ENCODE measurements at regions of chr13 and their contacts with region 1.

Region 1: GRCh38 chr13:34174671-34175145 is 356.8 kb downstream of the RFC3 start:
- DNase-seq: no peak
- ATAC-seq: no peak
- H3K4me3 ChIP-seq: no peak overlapping the region
- H3K27ac ChIP-seq: no peak overlapping the region
- H3K4me1 ChIP-seq: peaks cover 2 to 6% of the 10 kb centered on the region in 2 donors
- H3K27me3 ChIP-seq: no peaks in the 10 kb centered on the region

Region 2: GRCh38 chr13:34207334-34207733 is 32.6 kb after region 1 on chr13:
- intact Hi-C with region 1: loop called in 1 of 2 experiments (anchors 5 kb)
- DNase-seq: peak; percentile 56 to 75
- ATAC-seq: no peak
- H3K4me3 ChIP-seq: no peak overlapping the region
- H3K27ac ChIP-seq: peak overlapping the region in 1 of 2 donors; percentile 78
- H3K4me1 ChIP-seq: peaks cover 0 to 2% of the 10 kb centered on the region in 2 donors
- H3K27me3 ChIP-seq: no peaks in the 10 kb centered on the region

Region 3: DNA sequence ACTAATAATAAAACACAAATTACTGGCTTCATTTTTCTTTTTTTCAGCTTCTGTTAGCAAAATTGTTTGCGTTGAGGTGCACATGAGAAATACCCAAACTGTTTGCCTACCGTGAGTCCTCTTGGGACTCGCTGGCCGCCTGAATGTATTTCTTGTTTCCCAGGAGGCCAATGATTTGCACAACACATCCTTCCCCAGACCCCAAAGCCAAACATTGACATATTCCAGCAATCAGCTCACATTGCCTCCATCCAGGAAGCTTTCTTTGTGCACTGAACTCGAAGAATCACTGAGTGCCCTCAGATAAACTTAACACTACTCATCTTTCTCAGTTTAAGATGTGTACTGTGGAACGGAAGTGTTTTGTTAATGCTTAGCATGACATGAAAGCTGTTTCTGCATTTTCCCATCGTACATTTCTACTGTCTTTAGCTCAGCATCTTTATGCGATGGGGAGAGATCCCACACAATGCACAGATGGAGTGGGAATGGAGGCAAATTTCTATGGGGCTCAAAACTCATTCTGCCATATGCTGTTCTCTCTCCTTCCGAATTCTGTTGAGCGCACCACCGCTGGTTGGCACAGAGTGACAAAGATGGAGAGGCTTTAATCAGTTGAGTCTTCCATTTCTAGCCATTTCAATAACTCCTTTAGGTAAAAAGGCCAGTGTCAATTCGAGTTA is 42.8 kb after region 1 on chr13:
- intact Hi-C with region 1: no loop called
- DNase-seq: no peak
- ATAC-seq: no peak
- H3K4me3 ChIP-seq: no peak overlapping the region
- H3K27ac ChIP-seq: no peak overlapping the region
- H3K4me1 ChIP-seq: no peaks in the 10 kb centered on the region
- H3K27me3 ChIP-seq: no peaks in the 10 kb centered on the region

Measured in aorta (tissue), 5 donors.